Activated naive CD4-positive, alpha-beta T cell treated with anti-CD3 and anti-CD28 coated beads, Interleukin-2, amount 10 ng/mL, durations not matched to agents 7 days and 5 days (primary cell): ENCODE measurements at regions of chr17 and their contacts with region 1.

Region 1: DNA sequence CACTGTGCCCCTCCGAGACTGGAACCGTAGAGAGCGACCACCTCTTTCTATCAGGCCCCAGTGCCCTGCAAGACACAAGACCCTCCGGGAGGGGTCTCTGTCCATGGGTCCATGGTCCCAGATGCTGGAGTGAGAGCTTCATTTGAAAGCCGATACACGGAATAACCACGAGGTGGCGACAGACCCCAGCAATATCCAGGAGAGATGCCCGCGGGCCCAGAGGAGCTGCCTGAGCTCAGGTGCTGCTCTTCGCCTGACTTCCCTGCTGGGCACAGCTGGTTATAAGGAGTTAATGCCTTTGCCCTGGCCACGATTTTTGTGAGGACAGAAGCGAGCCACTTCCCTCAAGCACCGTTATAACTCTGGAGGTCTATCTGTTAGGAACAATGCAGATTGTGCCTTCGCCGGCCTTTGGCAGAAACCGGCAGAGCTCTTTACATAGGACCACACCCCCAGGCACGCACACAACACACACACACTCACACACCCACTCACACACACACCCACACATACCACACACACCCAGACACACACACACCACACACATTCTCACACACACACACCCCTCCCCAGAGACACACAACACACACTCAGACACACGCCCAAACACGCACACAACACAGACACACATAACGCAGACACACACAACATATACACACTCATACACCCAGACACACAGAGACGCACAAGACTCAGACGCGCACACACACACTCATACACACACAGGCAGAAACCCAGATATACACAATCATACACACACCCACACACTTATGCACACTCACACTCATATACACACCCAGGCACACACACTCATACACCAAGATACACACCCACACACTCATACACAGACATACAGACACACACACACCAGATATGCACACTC is 436.4 kb downstream of the SOX9 start:
- DNase-seq: peak; percentile 82
- H3K4me3 Mint-ChIP-seq: no peak overlapping the region
- H3K27ac Mint-ChIP-seq: no peak overlapping the region
- H3K4me1 Mint-ChIP-seq: peaks cover 5% of the 10 kb centered on the region
- H3K27me3 Mint-ChIP-seq: peaks cover 7% of the 10 kb centered on the region

Region 2: DNA sequence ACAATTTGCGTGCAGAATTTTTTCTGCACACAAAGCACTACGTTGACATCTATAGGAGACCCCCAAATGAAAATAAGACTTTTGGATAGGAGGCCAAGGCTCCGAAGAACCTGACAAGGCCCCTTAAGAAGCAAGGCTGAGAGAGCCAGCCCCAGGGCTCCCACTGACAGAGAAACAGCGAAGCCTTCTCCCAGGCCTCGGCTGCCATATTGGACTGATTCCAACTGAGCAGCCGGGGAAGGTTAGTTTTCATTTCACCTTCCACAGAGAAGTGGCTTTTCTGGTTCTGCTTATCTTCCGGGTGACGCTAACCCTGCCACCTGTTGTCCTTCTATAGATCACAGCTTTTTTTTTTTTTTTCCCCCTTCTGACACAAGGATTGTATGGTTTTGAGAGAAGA is 79.7 kb before region 1 on chr17:
- CTCF ChIA-PET with region 1: no interaction called
- DNase-seq: no peak
- H3K4me3 Mint-ChIP-seq: no peak overlapping the region
- H3K27ac Mint-ChIP-seq: no peak overlapping the region
- H3K4me1 Mint-ChIP-seq: no peaks in the 10 kb centered on the region
- H3K27me3 Mint-ChIP-seq: peaks cover 9% of the 10 kb centered on the region

Region 3: GRCh38 chr17:72715906-72716572 is 158.9 kb after region 1 on chr17:
- CTCF ChIA-PET with region 1: interaction called, 49 read pairs
- DNase-seq: no peak
- H3K4me3 Mint-ChIP-seq: no peak overlapping the region
- H3K27ac Mint-ChIP-seq: no peak overlapping the region
- H3K4me1 Mint-ChIP-seq: peaks cover 80% of the 10 kb centered on the region
- H3K27me3 Mint-ChIP-seq: peaks cover 10% of the 10 kb centered on the region

Region 4: GRCh38 chr17:72985881-72986720 is 428.9 kb after region 1 on chr17:
- CTCF ChIA-PET with region 1: interaction called, 21 read pairs
- DNase-seq: peak; percentile 64
- H3K4me3 Mint-ChIP-seq: no peak overlapping the region
- H3K27ac Mint-ChIP-seq: no peak overlapping the region
- H3K4me1 Mint-ChIP-seq: no peaks in the 10 kb centered on the region
- H3K27me3 Mint-ChIP-seq: no peaks in the 10 kb centered on the region

Region 5: GRCh38 chr17:73156166-73156840 is 599.1 kb after region 1 on chr17:
- CTCF ChIA-PET with region 1: interaction called, 55 read pairs
- DNase-seq: peak; percentile 73
- H3K4me3 Mint-ChIP-seq: no peak overlapping the region
- H3K27ac Mint-ChIP-seq: no peak overlapping the region
- H3K4me1 Mint-ChIP-seq: peaks cover 4% of the 10 kb centered on the region
- H3K27me3 Mint-ChIP-seq: peaks cover 51% of the 10 kb centered on the region

Region 6: DNA sequence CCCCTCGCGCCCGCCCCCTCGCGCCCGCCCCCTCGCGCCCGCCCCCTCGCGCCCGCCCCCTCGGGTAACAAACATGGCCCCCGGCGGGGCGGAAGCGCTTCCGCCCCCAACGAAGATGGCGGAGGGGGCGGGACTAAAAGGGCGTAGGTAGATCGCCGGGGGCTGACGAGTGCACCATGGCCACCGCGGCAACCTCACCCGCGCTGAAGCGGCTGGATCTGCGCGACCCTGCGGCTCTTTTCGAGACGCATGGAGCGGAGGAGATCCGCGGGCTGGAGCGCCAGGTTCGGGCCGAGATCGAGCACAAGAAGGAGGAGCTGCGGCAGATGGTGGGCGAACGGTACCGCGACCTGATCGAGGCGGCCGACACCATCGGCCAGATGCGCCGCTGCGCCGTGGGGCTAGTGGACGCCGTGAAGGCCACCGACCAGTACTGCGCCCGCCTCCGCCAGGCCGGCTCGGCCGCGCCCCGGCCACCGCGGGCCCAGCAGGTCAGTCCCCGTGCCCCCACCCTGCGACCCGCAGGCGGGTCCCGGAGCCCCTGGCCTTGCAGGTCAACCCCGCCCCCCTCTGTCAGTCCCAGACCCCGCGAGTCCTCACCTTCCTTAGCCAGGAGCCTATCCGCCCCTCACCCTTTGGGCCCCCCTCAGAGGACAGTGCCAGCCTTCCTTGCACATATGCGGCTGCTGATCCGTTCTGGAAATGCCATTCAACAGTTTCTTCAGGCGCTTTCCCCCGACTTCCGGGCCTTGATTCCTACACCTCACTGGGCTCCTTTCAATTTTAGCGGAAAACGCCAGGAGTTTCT is 635.9 kb after region 1 on chr17 and contains the start of gene COG1:
- CTCF ChIA-PET with region 1: interaction called, 22 read pairs
- DNase-seq: peak; percentile 94
- H3K4me3 Mint-ChIP-seq: peak within 1 kb of the TSS; percentile 98
- H3K27ac Mint-ChIP-seq: peak within 1 kb of the TSS; percentile 98
- H3K4me1 Mint-ChIP-seq: peaks cover 39% of the 10 kb centered on the region
- H3K27me3 Mint-ChIP-seq: no peaks in the 10 kb centered on the region